ENCODE measurements at regions of chr10 and their contacts with region 1.

Region 1: DNA sequence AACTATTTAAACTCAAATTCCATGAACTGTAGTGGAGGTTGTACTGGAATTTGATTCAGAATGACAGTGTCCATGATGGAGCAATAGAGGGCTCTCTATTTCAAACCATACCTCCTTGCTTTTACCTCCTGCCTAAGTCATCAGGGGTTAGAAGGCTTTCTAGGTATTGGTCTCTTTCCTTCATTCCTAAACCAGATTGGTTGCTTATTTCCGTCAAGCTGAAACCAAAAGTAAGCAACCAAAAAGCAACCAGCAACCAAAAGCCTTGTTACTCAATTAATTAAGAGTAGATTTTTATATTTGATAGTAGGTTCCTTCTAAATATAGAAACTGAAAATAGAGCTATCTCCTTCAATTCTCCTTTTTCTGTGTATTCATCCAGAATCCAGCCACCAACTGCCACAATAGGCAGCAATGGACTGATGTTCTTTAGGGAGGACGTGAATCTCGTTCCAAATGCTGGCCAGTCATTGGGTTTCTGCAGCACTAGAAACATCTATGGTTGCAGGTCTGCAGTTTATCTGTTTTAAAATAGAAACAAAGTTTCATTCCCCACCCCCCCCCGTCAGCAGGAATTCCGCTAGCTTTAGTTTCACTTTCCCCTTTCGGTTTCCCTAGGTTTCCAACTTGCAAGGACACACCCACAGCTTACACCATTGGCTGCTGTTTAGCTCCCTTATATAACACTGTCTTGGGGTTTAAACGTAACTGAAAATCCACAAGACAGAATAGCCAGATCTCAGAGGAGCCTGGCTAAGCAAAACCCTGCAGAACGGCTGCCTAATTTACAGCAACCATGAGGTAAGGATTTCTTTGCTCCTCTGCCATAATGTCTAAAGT is at the start of gene IFIT1:
- DNase-seq: peak; percentile 81
- H3K4me3 ChIP-seq: peak within 1 kb of the TSS; percentile 41 to 58 (median 52)
- H3K27ac ChIP-seq: peak within 1 kb of the TSS; percentile 81 to 93 (median 84)
- H3K4me1 ChIP-seq: peaks cover 0 to 45% (median 42%) of the 10 kb centered on the region in 4 donors
- H3K27me3 ChIP-seq: no peaks in the 10 kb centered on the region
- CTCF ChIP-seq: no peak
- EP300 ChIP-seq: no peak
- POLR2A ChIP-seq: peak in 1 of 2 donors; percentile 53
- total RNA-seq, gene IFIT1: 11.8 to 33.5 (median 20.9) TPM

Region 2: GRCh38 chr10:89314676-89315075 is 77.5 kb before region 1 on chr10:
- intact Hi-C with region 1: no loop called
- DNase-seq: no peak
- H3K4me3 ChIP-seq: no peak overlapping the region
- H3K27ac ChIP-seq: no peak overlapping the region
- H3K4me1 ChIP-seq: no peaks in the 10 kb centered on the region
- H3K27me3 ChIP-seq: no peaks in the 10 kb centered on the region
- CTCF ChIP-seq: no peak
- EP300 ChIP-seq: no peak
- POLR2A ChIP-seq: no peak

Region 3: DNA sequence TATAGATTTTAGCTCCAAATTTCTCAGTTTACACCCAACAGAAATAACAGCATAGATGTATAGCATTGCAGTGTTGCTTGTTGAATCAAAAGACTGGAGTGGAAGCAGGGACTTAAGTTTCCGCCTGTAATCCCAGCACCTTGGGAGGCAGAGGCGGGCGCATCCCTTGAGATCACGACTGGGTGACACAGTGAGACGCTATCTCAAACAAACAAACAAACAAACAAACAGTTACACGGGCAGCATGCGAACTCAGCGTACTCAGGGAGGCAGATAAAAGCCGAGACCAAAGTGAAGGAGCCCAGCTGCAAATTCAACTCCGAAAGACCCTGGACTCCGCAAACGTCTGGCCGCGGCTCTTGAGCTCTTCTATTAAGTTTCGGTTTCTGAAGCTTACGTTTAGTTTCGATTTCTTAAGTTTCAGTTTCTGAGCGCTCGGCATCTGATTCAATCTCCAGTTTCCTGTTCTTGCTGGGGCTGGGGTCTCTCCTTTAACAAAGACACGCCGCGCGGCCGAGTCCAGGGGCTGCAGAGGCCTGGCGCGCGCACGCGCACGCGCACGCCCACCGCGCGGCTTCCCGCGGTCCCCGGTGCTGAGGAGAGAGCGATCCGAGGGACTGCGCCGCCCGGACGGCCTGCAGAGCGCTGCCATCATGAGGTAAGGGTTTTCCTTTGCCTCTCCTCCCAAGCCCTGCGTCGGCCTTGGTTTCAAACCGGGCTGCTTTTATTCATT is 22.2 kb after region 1 on chr10 and contains the start of gene IFIT5:
- intact Hi-C with region 1: loop called (anchors 2 kb)
- DNase-seq: peak; percentile 88
- H3K4me3 ChIP-seq: peak within 1 kb of the TSS; percentile 73 to 89 (median 80)
- H3K27ac ChIP-seq: peak within 1 kb of the TSS; percentile 87 to 96 (median 94)
- H3K4me1 ChIP-seq: peaks cover 0 to 41% (median 30%) of the 10 kb centered on the region in 4 donors
- H3K27me3 ChIP-seq: no peaks in the 10 kb centered on the region
- CTCF ChIP-seq: no peak
- EP300 ChIP-seq: no peak
- POLR2A ChIP-seq: peak; percentile 12 to 29
- total RNA-seq, gene IFIT5: 10.2 to 24.3 (median 19.3) TPM